Ascending aorta (tissue), 2 donors: ENCODE measurements at regions of chr2 and their contacts with region 1.

Region 1: DNA sequence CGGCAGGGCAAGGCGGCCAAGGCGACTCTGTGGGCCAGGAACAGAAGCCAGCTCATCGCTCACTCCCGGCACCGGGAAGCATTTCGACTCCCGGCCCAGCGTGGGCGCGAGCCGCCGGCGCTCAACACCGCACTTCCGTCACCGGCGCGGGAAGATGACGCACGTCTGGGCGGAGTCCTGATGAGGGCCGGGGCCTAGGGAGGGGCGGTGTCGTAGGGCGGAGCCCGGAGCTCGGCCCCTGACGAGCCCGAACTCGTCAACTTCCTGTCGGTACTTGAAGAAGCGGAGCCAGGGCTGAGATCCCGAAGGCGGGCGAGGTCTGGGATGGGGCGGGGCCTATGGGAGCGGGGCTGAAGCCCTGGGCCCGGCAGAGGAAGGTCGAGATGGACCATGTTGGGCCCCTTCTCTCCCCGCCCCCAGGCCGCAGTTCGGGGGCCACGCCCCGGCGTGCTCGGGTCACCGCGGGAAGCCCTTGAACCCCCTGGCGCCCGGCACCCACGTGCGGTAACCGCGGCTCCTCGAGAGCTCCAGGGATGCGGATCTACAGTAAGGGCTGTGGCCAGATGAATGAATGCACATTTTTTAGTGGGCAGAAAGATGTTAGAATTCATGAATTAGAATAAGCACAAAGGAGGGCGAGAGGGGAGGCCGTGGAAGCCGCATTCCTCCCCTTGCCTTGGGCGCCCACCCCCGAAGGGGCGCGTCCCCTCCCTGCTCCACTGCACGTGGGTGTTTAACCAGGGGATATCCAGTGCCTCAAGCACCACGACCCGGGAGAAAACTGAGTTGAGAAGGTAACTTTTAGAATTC is at the start of gene RNASEH1:
- DNase-seq: peak; percentile 90 to 99
- H3K4me3 ChIP-seq: peak within 1 kb of the TSS; percentile 84 to 94
- H3K27ac ChIP-seq: peak within 1 kb of the TSS; percentile 92 to 97
- H3K4me1 ChIP-seq: peaks cover 4 to 10% of the 10 kb centered on the region in 2 donors
- H3K27me3 ChIP-seq: no peaks in the 10 kb centered on the region
- CTCF ChIP-seq: no peak
- total RNA-seq, gene RNASEH1: 9.3 TPM

Region 2: GRCh38 chr2:3470166-3470651 is 88.2 kb before region 1 on chr2:
- intact Hi-C with region 1: loop called (anchors 1 kb)
- DNase-seq: peak; percentile 60 to 93
- H3K4me3 ChIP-seq: peak overlapping the region in 1 of 2 donors; percentile 25
- H3K27ac ChIP-seq: peak overlapping the region; percentile 90 to 91
- H3K4me1 ChIP-seq: peaks cover 2 to 28% of the 10 kb centered on the region in 2 donors
- H3K27me3 ChIP-seq: no peaks in the 10 kb centered on the region
- CTCF ChIP-seq: no peak

Region 3: DNA sequence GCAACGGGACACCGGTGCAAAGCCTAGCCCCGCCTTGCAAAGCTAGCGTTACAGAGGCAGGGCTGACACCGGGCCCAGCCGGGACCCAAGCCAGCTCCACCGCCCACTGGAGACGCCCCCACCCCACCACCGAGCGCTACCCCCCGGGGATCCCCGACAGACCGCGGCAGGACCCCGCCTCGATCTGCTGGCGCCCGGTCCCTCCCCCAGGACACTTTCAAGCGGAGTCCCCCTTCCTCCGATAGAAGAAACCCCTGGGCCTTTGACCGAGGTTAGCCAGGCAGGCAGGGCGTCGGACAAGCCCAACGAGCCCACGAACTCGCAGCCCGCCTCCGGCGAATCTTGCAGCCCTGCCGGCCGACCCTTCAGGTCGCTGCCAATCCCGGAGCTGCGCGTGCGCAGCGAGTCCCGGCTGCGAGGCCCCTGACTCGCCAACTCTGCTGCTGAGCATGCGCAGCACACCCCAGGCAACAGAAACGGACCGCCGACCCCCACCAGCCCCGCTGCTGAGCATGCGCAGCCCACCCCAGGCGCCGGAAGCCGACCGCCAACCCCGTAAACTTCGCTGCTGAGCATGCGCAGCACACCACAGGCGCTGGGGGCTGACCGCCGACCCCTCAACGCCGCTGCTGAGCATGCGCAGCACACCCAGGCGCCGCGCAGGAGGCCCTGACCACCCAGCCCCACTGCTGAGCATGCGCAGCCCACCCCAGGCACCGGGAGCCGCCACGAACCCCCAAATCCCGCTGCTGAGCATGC is 39.7 kb before region 1 on chr2:
- intact Hi-C with region 1: loop called (anchors 1 kb)
- DNase-seq: peak; percentile 91 to 98
- H3K4me3 ChIP-seq: peak overlapping the region; percentile 84 to 93
- H3K27ac ChIP-seq: peak overlapping the region; percentile 97 to 100
- H3K4me1 ChIP-seq: peaks cover 4 to 18% of the 10 kb centered on the region in 2 donors
- H3K27me3 ChIP-seq: no peaks in the 10 kb centered on the region
- CTCF ChIP-seq: no peak

Region 4: DNA sequence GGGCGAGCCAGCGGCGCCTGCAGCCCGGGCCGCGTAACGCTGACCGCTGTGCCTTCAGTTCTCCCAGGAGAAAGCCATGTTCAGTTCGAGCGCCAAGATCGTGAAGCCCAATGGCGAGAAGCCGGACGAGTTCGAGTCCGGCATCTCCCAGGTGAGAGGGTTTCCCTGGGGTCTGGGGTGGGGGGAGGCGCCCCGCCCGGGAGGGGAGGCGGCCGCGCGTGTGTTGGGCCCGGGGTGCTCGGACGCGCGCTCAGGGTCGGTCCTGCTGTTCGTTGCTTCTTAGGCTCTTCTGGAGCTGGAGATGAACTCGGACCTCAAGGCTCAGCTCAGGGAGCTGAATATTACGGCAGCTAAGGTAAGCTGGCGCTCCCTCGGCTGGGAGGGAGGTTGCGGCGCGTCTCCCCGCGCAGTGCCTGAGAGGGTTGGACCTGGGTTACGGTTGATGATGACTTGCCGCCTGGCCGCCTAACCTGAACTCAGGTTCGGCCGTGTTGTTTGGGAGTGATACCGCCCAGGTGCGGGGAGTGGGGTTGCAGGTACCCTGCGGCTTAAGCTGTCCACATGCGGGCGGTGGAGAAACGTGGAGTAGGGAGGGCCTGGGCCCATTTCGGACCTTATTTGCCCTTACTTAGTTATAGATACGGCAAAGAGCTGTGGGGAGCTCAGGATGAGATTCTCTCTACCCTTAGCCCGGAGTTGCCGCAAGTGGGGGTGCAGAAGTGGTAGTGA is 17.3 kb after region 1 on chr2:
- intact Hi-C with region 1: loop called (anchors 1 kb)
- DNase-seq: no peak
- H3K4me3 ChIP-seq: peak overlapping the region; percentile 73 to 89
- H3K27ac ChIP-seq: peak overlapping the region; percentile 88 to 94
- H3K4me1 ChIP-seq: peaks cover 9 to 11% of the 10 kb centered on the region in 2 donors
- H3K27me3 ChIP-seq: no peaks in the 10 kb centered on the region
- CTCF ChIP-seq: no peak

Region 5: GRCh38 chr2:5215989-5216607 is 1657.7 kb after region 1 on chr2:
- intact Hi-C with region 1: no loop called
- DNase-seq: no peak
- H3K4me3 ChIP-seq: no peak overlapping the region
- H3K27ac ChIP-seq: no peak overlapping the region
- H3K4me1 ChIP-seq: no peaks in the 10 kb centered on the region
- H3K27me3 ChIP-seq: no peaks in the 10 kb centered on the region
- CTCF ChIP-seq: no peak